Caco-2 (cell line): ENCODE measurements at regions of chr12 and their contacts with region 1.

Region 1: GRCh38 chr12:89084751-89085150 is 267.6 kb downstream of the DUSP6 start:
- DNase-seq: no peak
- H3K4me3 ChIP-seq: no peak overlapping the region
- H3K4me3 Mint-ChIP-seq: no peak overlapping the region
- H3K27ac Mint-ChIP-seq: no peak overlapping the region
- H3K4me1 ChIP-seq: peaks cover 38% of the 10 kb centered on the region
- H3K4me1 Mint-ChIP-seq: peaks cover 22% of the 10 kb centered on the region
- H3K27me3 ChIP-seq: no peaks in the 10 kb centered on the region
- H3K27me3 Mint-ChIP-seq: no peaks in the 10 kb centered on the region
- CTCF ChIP-seq: no peak

Region 2: GRCh38 chr12:89059721-89060541 is 24.8 kb before region 1 on chr12:
- CTCF ChIA-PET with region 1: no interaction called
- POLR2A ChIA-PET with region 1: no interaction called
- intact Hi-C with region 1: loop called (anchors 2 kb)
- DNase-seq: peak in 1 of 2 experiments; percentile 6
- H3K4me3 ChIP-seq: no peak overlapping the region
- H3K4me3 Mint-ChIP-seq: no peak overlapping the region
- H3K27ac Mint-ChIP-seq: peak overlapping the region; percentile 37
- H3K4me1 ChIP-seq: peaks cover 30% of the 10 kb centered on the region
- H3K4me1 Mint-ChIP-seq: peaks cover 29% of the 10 kb centered on the region
- H3K27me3 ChIP-seq: no peaks in the 10 kb centered on the region
- H3K27me3 Mint-ChIP-seq: no peaks in the 10 kb centered on the region
- CTCF ChIP-seq: no peak

Region 3: GRCh38 chr12:89156862-89157262 is 72.1 kb after region 1 on chr12:
- CTCF ChIA-PET with region 1: no interaction called
- POLR2A ChIA-PET with region 1: no interaction called
- intact Hi-C with region 1: no loop called
- DNase-seq: no peak
- H3K4me3 ChIP-seq: no peak overlapping the region
- H3K4me3 Mint-ChIP-seq: no peak overlapping the region
- H3K27ac Mint-ChIP-seq: no peak overlapping the region
- H3K4me1 ChIP-seq: peaks cover 9% of the 10 kb centered on the region
- H3K4me1 Mint-ChIP-seq: peaks cover 17% of the 10 kb centered on the region
- H3K27me3 ChIP-seq: no peaks in the 10 kb centered on the region
- H3K27me3 Mint-ChIP-seq: no peaks in the 10 kb centered on the region
- CTCF ChIP-seq: no peak